Calu3 (cell line): ENCODE measurements at regions of chr4 and their contacts with region 1.

Region 1: DNA sequence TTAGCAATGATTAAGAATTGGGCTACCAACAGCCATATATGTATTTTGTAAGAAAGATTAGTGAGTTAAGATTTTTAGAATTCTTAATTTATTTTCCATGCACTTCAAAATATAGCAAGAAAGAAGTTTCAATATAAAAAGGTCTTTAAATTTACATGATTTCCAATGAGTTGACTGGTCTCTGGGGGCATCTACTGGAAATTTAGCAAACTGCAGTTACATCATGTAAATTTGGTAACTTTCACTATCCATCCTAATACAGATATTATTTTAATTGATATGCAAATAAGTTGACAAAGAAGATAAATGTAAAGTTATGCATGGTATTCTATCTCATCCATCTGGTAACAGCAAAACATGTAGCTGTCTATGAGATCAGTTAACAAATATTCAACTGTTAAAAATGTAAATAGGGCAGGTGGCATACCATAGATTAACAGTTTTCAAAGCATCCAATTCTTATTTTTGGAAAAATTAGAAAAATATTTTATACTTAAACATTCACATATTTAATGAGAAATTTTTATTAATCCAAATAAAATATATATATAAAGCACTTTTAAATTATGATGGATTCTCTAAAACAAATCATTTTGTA is 29.1 kb downstream of the TTC29 start:
- DNase-seq: peak; percentile 5
- H3K4me3 Mint-ChIP-seq: no peak overlapping the region
- H3K27ac Mint-ChIP-seq: no peak overlapping the region
- H3K4me1 Mint-ChIP-seq: no peaks in the 10 kb centered on the region
- H3K27me3 Mint-ChIP-seq: no peaks in the 10 kb centered on the region
- CTCF ChIP-seq: peak; percentile 50

Region 2: DNA sequence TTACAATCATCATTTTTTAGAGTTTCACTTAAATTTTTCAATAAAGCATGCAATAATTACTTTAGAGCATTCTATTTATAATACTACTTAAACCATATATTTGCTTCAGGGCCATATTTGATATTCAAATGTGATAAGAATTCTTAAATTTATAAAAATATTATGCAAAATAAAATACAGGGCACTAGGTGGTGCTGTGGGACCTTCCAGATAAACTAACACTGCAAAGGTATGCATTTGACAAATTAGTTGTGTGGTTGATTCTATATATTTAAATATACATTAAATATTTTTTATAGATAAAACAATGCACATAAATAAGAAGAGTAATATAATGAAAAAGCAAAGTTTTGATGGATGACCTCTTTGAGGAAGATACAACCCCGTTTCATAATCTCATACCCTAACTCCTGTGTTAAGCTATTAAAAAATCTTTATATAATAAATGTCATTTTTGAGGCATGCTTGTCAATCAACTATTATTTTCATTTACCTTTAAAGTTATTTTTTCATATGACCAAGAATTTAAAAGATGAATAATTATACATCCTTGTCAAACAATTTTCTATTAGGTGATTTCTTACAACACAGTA is 573.9 kb before region 1 on chr4:
- CTCF ChIA-PET with region 1: no interaction called
- intact Hi-C with region 1: loop called (anchors 2 kb)
- DNase-seq: peak; percentile 19
- H3K4me3 Mint-ChIP-seq: no peak overlapping the region
- H3K27ac Mint-ChIP-seq: no peak overlapping the region
- H3K4me1 Mint-ChIP-seq: no peaks in the 10 kb centered on the region
- H3K27me3 Mint-ChIP-seq: no peaks in the 10 kb centered on the region
- CTCF ChIP-seq: no peak

Region 3: GRCh38 chr4:146545102-146545501 is 371.5 kb before region 1 on chr4:
- CTCF ChIA-PET with region 1: no interaction called
- intact Hi-C with region 1: loop called (anchors 2 kb)
- DNase-seq: peak; percentile 17
- H3K4me3 Mint-ChIP-seq: no peak overlapping the region
- H3K27ac Mint-ChIP-seq: no peak overlapping the region
- H3K4me1 Mint-ChIP-seq: no peaks in the 10 kb centered on the region
- H3K27me3 Mint-ChIP-seq: no peaks in the 10 kb centered on the region
- CTCF ChIP-seq: no peak

Region 4: DNA sequence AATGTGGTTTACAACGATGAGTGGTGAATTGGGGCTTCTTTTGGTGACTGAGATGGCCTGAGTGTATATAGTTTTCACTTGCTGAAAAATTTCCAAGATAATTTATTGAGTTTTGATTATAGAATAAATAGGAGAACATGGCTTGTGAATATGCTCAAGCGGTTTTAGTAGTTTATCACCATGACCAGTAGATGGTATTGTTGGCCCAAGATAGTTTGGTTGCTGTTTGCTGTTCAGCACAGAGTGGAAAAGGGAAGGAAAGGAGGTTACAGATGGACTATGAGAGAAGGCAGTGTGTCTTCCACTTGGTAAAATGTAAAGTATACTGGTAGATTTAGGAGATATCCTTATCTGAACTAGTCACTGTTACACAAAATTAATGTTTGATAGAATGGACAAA is 333.7 kb before region 1 on chr4:
- CTCF ChIA-PET with region 1: no interaction called
- intact Hi-C with region 1: loop called (anchors 1 kb)
- DNase-seq: no peak
- H3K4me3 Mint-ChIP-seq: no peak overlapping the region
- H3K27ac Mint-ChIP-seq: no peak overlapping the region
- H3K4me1 Mint-ChIP-seq: no peaks in the 10 kb centered on the region
- H3K27me3 Mint-ChIP-seq: peaks cover 16% of the 10 kb centered on the region
- CTCF ChIP-seq: no peak

Region 5: DNA sequence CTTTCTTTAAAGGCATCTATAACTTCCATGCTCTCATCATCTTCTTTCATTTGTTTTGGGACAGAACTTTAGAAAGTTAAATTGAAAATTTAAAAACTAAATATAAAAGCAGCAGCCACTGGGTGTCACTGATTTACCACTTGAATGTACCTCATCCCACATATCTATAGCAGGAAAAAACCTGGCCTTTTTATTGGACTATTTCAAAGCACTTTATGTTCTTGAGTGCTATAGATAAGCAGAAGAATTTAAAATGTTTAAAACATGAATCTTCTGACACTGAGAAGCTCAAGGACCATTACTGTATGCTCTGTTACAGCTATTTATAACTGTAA is 194.4 kb after region 1 on chr4:
- CTCF ChIA-PET with region 1: no interaction called
- intact Hi-C with region 1: no loop called
- DNase-seq: no peak
- H3K4me3 Mint-ChIP-seq: no peak overlapping the region
- H3K27ac Mint-ChIP-seq: no peak overlapping the region
- H3K4me1 Mint-ChIP-seq: no peaks in the 10 kb centered on the region
- H3K27me3 Mint-ChIP-seq: no peaks in the 10 kb centered on the region
- CTCF ChIP-seq: no peak

Region 6: GRCh38 chr4:147123146-147123545 is 206.6 kb after region 1 on chr4:
- CTCF ChIA-PET with region 1: no interaction called
- intact Hi-C with region 1: no loop called
- DNase-seq: no peak
- H3K4me3 Mint-ChIP-seq: no peak overlapping the region
- H3K27ac Mint-ChIP-seq: no peak overlapping the region
- H3K4me1 Mint-ChIP-seq: no peaks in the 10 kb centered on the region
- H3K27me3 Mint-ChIP-seq: no peaks in the 10 kb centered on the region
- CTCF ChIP-seq: no peak